ENCODE measurements at regions of chr1 and their contacts with region 1.

Region 1: DNA sequence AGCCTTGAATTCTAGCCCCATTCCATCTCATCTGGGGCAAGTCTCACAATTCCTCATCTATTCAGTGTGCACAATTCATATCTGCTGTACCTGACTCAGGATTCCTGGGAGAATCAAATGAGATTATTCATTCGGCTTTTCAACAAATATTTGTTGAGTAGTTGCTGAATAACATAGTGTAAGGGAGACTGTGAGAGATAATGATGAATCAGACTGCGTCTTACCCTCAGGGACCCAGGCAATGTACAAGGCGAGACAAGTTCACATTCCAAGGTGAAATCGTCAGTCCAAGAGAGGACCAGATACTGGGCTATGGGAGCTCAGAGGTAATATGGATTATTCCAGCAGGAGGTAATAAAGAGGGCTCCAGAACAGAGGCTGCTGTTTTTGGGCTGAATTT is 67.8 kb upstream of the SMYD2 start:
- DNase-seq: peak; percentile 94
- ATAC-seq: peak; percentile 84
- H3K4me3 ChIP-seq: peak overlapping the region; percentile 0; the same call in 1 of the 2 replicates
- H3K27ac ChIP-seq: peak overlapping the region; percentile 19; the same call in 1 of the 2 replicates
- H3K4me1 ChIP-seq: peaks cover 56% of the 10 kb centered on the region
- H3K27me3 ChIP-seq: no peaks in the 10 kb centered on the region
- CTCF ChIP-seq: no peak

Region 2: DNA sequence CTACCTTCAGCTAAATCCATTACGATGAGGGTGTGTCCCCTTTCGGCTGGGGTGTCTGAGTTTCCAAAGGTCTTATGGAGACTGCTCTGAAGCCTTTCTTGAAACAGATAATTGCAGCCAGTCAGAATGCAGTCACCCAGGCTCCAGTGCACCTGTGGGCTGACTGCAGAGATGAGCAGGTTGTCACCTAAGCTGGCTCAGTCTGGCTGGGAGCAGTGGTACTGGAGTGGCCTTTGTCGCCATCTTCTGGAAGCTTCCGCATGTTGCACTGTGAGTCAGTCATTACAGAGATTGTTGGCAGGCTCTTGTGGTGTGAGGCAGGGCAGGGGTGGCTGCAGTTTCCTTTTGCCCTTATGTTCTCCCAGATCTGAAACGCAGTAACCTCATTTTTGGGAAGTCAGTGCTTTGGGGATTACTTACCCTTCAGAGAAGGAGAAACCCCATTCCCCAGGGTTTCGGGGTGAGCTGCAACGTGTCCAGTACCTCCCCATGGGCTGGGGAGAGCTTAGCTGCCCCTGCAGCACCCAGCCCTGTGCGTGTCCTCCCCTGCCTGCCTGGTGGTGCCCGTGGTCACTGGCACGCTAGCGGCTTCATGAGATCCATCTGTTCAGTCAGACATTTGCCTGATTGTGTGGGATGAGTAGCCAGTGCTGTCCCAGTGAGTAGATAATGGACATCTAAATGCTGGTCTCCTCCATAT is 115.8 kb after region 1 on chr1:
- CTCF ChIA-PET with region 1: interaction called, 53 read pairs
- POLR2A ChIA-PET with region 1: no interaction called
- intact Hi-C with region 1: loop called (anchors 1 kb)
- DNase-seq: peak; percentile 96
- ATAC-seq: peak; percentile 93
- H3K4me3 ChIP-seq: no peak overlapping the region
- H3K27ac ChIP-seq: no peak overlapping the region
- H3K4me1 ChIP-seq: peaks cover 4% of the 10 kb centered on the region
- H3K27me3 ChIP-seq: no peaks in the 10 kb centered on the region
- CTCF ChIP-seq: peak; percentile 96

Region 3: GRCh38 chr1:214590696-214591095 is 377.6 kb after region 1 on chr1:
- CTCF ChIA-PET with region 1: interaction called, 4 read pairs
- POLR2A ChIA-PET with region 1: no interaction called
- intact Hi-C with region 1: loop called (anchors 2 kb)
- DNase-seq: peak; percentile 46
- ATAC-seq: peak; percentile 68
- H3K4me3 ChIP-seq: no peak overlapping the region
- H3K27ac ChIP-seq: no peak overlapping the region
- H3K4me1 ChIP-seq: no peaks in the 10 kb centered on the region
- H3K27me3 ChIP-seq: no peaks in the 10 kb centered on the region
- CTCF ChIP-seq: peak; percentile 61

Measured in PC-3 (cell line).